Activated T-helper 1 cell treated with anti-CD3 and anti-CD28 coated beads, Interleukin-12 subunit alpha, Interleukin-12 subunit beta, Interleukin-2, Interleukin-4 antibody, amounts not matched to agents 30 ng/mL and 10 ng/mL and 1 ng/mL, durations not matched to agents 14 hours and 24 hours and 36 hours (primary cell): ENCODE measurements at regions of chr2 and their contacts with region 1.

Region 1: GRCh38 chr2:241355983-241356870 is at the start of gene FARP2:
- DNase-seq: peak; percentile 95
- H3K4me3 Mint-ChIP-seq: peak within 1 kb of the TSS; percentile 84
- H3K27ac Mint-ChIP-seq: peak within 1 kb of the TSS; percentile 83
- H3K4me1 Mint-ChIP-seq: peaks cover 22% of the 10 kb centered on the region
- H3K27me3 Mint-ChIP-seq: peaks cover 2% of the 10 kb centered on the region
- total RNA-seq, gene FARP2: 36.6 and 40.9 TPM in 2 replicates

Region 2: DNA sequence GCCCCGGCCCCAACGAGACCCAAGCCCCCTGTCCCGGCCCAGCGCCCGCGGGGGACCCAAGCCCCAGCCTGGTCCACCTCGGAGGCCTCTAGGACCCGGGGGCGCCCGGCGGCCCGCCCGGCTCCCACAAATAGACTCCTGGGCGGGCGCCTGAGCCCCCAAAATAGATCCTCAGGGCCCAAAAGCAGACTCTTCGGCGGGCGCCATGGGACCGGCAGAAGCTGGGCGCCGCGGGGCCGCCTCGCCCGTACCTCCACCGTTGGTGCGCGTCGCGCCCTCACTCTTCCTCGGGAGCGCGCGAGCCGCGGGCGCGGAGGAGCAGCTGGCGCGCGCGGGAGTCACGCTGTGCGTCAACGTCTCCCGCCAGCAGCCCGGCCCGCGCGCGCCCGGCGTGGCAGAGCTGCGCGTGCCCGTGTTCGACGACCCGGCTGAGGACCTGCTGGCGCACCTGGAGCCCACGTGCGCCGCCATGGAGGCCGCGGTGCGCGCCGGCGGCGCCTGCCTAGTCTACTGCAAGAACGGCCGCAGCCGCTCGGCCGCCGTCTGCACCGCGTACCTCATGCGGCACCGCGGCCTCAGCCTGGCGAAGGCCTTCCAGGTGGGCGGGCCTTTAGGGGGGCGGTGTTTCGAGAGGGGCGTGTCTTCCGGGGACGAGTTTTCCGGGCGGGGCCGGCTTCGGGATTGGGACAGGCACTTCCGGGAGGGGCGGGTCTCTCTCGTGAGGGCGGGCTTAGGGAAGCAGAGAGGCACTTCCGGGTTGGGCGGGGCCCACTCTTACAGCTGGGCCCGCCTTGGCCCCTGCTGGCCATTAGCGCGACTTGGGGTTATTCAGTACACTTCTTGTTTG is 795.5 kb before region 1 on chr2:
- intact Hi-C with region 1: loop called (anchors 5 kb)
- DNase-seq: peak; percentile 99
- H3K4me3 Mint-ChIP-seq: peak overlapping the region; percentile 90
- H3K27ac Mint-ChIP-seq: peak overlapping the region; percentile 95
- H3K4me1 Mint-ChIP-seq: peaks cover 75% of the 10 kb centered on the region
- H3K27me3 Mint-ChIP-seq: no peaks in the 10 kb centered on the region

Region 3: DNA sequence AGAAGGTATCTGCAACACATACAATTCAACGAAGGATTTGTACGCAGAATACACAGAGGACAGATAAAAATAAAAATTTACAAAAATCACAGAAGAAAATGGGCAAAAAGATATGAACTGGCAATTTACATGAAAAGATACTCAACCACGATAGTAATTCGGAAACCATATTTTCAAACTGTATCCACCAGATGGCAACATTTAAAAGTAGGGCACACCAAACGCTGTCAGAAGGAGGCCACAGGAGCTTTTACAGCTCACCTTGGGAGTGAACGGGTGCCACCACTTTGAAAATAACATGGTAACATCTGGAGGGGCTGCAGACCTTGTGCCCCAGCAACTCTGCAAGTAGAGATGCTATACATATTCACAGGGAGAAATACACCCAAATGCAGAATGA is 546.0 kb before region 1 on chr2:
- intact Hi-C with region 1: no loop called
- DNase-seq: no peak
- H3K4me3 Mint-ChIP-seq: no peak overlapping the region
- H3K27ac Mint-ChIP-seq: no peak overlapping the region
- H3K4me1 Mint-ChIP-seq: no peaks in the 10 kb centered on the region
- H3K27me3 Mint-ChIP-seq: peaks cover 13% of the 10 kb centered on the region

Region 4: DNA sequence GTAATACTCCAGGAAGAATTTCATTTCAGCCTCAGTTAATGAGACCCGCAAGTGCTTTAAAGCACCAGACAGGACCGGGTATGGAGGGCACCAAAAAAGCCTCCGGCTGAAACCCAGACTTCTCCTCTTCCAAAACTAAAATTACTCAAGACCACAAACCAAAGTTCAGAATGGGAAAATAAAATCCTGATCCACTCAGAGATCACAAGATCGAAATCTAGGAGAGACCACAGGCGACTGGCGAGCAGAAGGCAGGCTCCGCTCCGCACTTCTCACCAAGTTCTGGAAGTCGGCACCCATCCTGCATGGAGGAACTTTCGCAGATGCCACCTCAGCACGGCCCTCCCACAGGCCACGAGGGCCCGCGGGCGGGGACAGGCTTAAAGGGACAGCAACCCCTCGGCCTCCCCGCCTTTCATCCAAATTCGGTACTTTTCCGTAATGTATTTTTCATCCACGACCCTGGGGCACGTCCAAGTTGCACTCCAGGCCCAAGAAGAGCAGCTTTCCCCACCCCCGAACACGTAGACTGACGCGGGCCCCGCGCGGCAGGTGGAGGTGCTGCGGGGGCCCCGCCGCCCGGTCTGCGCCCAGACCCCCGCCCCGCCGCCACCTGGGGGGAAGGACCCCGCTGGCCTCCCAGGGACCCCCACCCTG is 84.5 kb before region 1 on chr2:
- intact Hi-C with region 1: loop called (anchors 5 kb)
- DNase-seq: peak; percentile 47
- H3K4me3 Mint-ChIP-seq: peak overlapping the region; percentile 92
- H3K27ac Mint-ChIP-seq: peak overlapping the region; percentile 86
- H3K4me1 Mint-ChIP-seq: peaks cover 29% of the 10 kb centered on the region
- H3K27me3 Mint-ChIP-seq: no peaks in the 10 kb centered on the region

Region 5: DNA sequence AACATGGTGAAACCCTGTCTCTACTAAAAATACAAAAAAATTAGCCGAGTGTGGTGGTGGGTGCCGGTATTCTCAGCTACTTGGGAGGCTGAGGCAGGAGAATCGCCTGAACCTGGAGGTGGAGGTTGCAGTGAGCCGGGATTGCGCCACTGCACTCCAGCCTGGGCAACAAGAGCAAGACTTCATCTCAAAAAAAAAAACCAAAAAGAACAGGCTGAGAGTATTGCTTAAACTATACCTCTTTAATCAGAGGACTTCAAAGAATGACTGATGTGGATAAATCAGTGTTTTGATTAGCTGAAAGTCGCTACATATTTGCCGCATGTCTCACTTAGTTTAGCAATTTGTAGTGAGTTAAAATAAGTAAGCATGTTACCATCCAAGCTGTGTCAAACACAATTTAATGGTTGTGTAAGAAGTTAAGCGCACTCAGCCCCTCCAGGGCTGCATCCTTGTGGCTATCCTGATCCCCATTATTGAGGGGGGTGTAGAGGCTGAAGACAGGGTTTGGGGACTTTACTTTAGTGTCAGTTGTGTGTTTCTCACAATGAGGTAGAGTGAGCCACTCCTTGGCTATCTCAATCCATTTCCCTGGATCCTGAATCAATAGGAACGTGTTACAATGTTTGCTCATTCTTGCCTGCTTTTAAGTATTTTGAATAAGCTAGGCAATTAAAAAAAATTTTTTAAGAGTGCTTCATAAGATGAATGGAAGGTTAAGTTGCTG is 11.1 kb before region 1 on chr2:
- intact Hi-C with region 1: no loop called
- DNase-seq: no peak
- H3K4me3 Mint-ChIP-seq: no peak overlapping the region
- H3K27ac Mint-ChIP-seq: no peak overlapping the region
- H3K4me1 Mint-ChIP-seq: peaks cover 18% of the 10 kb centered on the region
- H3K27me3 Mint-ChIP-seq: no peaks in the 10 kb centered on the region

Region 6: GRCh38 chr2:241508240-241509154 is 152.3 kb after region 1 on chr2 and contains the start of gene STK25:
- intact Hi-C with region 1: loop called (anchors 1 kb)
- DNase-seq: peak; percentile 98
- H3K4me3 Mint-ChIP-seq: peak within 1 kb of the TSS; percentile 83
- H3K27ac Mint-ChIP-seq: peak within 1 kb of the TSS; percentile 81
- H3K4me1 Mint-ChIP-seq: peaks cover 8% of the 10 kb centered on the region
- H3K27me3 Mint-ChIP-seq: peaks cover 6% of the 10 kb centered on the region
- total RNA-seq, gene STK25: 125 and 133 TPM in 2 replicates

Region 7: DNA sequence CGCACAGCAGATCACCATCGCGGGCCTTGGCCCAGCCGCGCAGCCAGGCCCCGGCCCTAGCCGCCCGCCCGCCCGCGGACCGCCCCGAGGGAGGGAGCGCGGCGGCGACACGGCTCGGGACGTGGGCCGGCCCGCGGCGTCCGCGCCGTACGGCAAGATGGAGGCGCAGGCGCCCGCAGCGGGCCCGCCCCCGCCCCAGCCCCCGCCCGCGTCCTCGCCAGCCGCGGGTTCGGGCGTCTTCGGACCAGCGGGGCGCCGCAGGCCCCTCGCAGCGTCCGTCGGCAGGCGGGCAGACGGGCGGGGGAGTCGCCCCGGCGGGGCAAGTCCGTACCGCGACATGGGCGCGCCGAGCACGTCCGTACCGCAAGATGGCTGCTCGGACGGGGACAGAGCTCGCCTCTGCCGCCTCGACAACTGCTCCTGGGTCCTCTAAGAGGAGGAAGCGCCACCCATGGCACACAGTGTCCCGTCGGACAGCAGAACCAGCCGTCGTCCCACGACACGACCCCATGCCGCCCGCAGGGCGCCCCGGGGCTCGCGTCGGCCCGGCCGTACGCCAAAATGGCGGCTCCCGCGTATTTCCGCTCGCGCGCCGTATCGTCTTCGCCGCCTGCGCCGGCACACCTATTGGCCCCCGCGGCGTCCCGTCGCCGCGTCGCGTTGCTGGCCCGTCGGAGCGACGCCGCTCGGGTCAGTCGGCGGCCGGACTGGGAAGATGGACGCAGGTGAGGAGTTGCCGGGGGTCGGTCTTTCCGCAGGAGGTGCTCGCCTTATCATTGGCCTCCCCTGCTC is 281.0 kb after region 1 on chr2 and contains the starts of genes ATG4B and THAP4:
- intact Hi-C with region 1: loop called (anchors 1 kb)
- DNase-seq: peak; percentile 78
- H3K4me3 Mint-ChIP-seq: peak within 1 kb of the TSS; percentile 93
- H3K27ac Mint-ChIP-seq: peak within 1 kb of the TSS; percentile 93
- H3K4me1 Mint-ChIP-seq: peaks cover 44% of the 10 kb centered on the region
- H3K27me3 Mint-ChIP-seq: no peaks in the 10 kb centered on the region
- total RNA-seq, gene ATG4B: 116 and 126 TPM in 2 replicates
- total RNA-seq, gene THAP4: 53.1 and 58.5 TPM in 2 replicates

Region 8: GRCh38 chr2:241734467-241735208 is 378.4 kb after region 1 on chr2 and contains the start of gene D2HGDH:
- intact Hi-C with region 1: loop called (anchors 2 kb)
- DNase-seq: peak; percentile 89
- H3K4me3 Mint-ChIP-seq: peak within 1 kb of the TSS; percentile 82
- H3K27ac Mint-ChIP-seq: no peak within 1 kb of the TSS
- H3K4me1 Mint-ChIP-seq: peaks cover 41% of the 10 kb centered on the region
- H3K27me3 Mint-ChIP-seq: peaks cover 3% of the 10 kb centered on the region
- total RNA-seq, gene D2HGDH: 27.1 and 28.7 TPM in 2 replicates